ENCODE measurements at regions of chr19 and their contacts with region 1.

Region 1: GRCh38 chr19:16495982-16496612 is at the starts of genes C19orf44 and CALR3:
- DNase-seq: peak; percentile 95 to 99 (median 96)
- ATAC-seq: peak; percentile 99
- H3K4me3 ChIP-seq: peak within 1 kb of the TSS; percentile 58
- H3K27ac ChIP-seq: peak within 1 kb of the TSS; percentile 60
- H3K4me1 ChIP-seq: peaks cover 8 to 25% of the 10 kb centered on the region in 2 experiments; a peak in 4 of 5 replicates
- H3K27me3 ChIP-seq: no peaks in the 10 kb centered on the region
- CTCF ChIP-seq: peak in 2 of 3 experiments; percentile 30 to 40; a peak in 2 of 6 replicates
- EP300 ChIP-seq: 0 out of 2 replicates have a peak, but pooled peaks have one; percentile 22
- POLR2A ChIP-seq: peak; percentile 90
- RAD21 ChIP-seq: peak in 1 of 2 experiments; percentile 30; a peak in 2 of 4 replicates
- polyA plus RNA-seq, gene C19orf44: 0.41 to 0.51 TPM
- polyA plus RNA-seq, gene CALR3: 0.22 to 0.24 TPM

Region 2: GRCh38 chr19:16446724-16447368 is 49.3 kb before region 1 on chr19:
- CTCF ChIA-PET with region 1: no interaction called
- POLR2A ChIA-PET with region 1: no interaction called
- in situ Hi-C with region 1: no loop called
- intact Hi-C with region 1: loop called (anchors 5 kb)
- DNase-seq: peak; percentile 57 to 80 (median 67)
- ATAC-seq: peak; percentile 98
- H3K4me3 ChIP-seq: no peak overlapping the region
- H3K27ac ChIP-seq: peak overlapping the region; percentile 53; the same call in 1 of the 3 replicates
- H3K4me1 ChIP-seq: peaks cover 21 to 24% of the 10 kb centered on the region in 2 experiments; a peak in 4 of 5 replicates
- H3K27me3 ChIP-seq: no peaks in the 10 kb centered on the region
- CTCF ChIP-seq: no peak
- EP300 ChIP-seq: no peak
- POLR2A ChIP-seq: no peak
- RAD21 ChIP-seq: no peak

Region 3: GRCh38 chr19:16548956-16549355 is 52.9 kb after region 1 on chr19:
- CTCF ChIA-PET with region 1: no interaction called
- POLR2A ChIA-PET with region 1: no interaction called
- in situ Hi-C with region 1: no loop called
- intact Hi-C with region 1: no loop called
- DNase-seq: no peak
- ATAC-seq: no peak
- H3K4me3 ChIP-seq: no peak overlapping the region
- H3K27ac ChIP-seq: no peak overlapping the region
- H3K4me1 ChIP-seq: peaks cover 0 to 4% of the 10 kb centered on the region in 2 experiments; a peak in 2 of 5 replicates
- H3K27me3 ChIP-seq: no peaks in the 10 kb centered on the region
- CTCF ChIP-seq: no peak
- EP300 ChIP-seq: no peak
- POLR2A ChIP-seq: no peak
- RAD21 ChIP-seq: no peak